PC-9 (cell line): ENCODE measurements at regions of chr17 and their contacts with region 1.

Region 1: DNA sequence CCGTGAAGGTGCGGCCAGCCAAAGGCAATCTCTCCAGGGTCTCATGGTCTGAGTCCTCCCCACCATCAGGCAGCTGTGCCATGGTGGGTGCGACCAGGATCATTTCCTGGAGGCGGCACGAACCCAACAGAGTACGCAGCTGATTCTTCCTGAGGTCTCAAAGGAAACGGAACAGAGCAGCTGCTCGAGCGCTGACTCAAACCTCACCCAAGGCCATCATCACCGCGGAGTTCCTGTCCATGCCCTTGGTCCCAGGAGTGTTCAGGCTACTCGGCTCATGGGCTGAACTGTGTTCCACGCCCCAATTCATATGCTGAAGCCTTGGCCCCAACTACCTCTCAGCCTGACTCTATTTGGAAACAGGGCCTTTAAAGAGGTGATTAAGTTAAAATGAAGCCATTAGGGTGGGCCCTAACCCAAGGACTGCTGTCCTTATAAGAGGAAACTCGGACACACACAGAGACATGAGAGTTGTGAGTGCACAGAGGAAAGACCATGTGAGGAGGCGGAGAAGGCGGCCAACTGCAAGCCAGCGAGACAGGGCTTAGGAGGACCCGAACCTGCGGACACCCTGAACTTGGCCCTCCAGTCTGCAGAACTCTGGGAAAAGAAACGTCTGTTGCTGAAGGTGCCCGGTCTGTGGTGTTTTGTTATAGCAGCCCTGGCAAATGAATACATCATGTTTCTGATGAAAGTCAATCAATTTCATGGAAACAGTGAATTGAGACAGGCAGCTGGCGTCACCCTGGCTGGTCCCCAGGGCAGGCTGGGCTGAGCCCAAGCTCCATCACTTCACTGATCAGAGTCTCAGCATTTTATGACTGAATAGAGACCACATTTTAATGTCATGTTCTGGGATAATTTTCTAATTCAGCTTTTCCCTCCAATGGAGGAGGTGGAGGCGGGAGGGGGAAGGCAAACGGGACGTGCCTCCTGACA is 13.7 kb downstream of the MXRA7 start:
- DNase-seq: no peak
- H3K4me3 ChIP-seq: no peak overlapping the region
- H3K27ac ChIP-seq: no peak overlapping the region
- H3K4me1 ChIP-seq: no peaks in the 10 kb centered on the region
- H3K27me3 ChIP-seq: no peaks in the 10 kb centered on the region
- CTCF ChIP-seq: no peak

Region 2: GRCh38 chr17:76623271-76624146 is 73.5 kb before region 1 on chr17:
- CTCF ChIA-PET with region 1: interaction called, 17 read pairs
- POLR2A ChIA-PET with region 1: no interaction called
- intact Hi-C with region 1: no loop called
- DNase-seq: peak in 1 of 2 experiments; percentile 76
- H3K4me3 ChIP-seq: no peak overlapping the region
- H3K27ac ChIP-seq: no peak overlapping the region
- H3K4me1 ChIP-seq: peaks cover 15% of the 10 kb centered on the region
- H3K27me3 ChIP-seq: no peaks in the 10 kb centered on the region
- CTCF ChIP-seq: peak; percentile 83

Region 3: DNA sequence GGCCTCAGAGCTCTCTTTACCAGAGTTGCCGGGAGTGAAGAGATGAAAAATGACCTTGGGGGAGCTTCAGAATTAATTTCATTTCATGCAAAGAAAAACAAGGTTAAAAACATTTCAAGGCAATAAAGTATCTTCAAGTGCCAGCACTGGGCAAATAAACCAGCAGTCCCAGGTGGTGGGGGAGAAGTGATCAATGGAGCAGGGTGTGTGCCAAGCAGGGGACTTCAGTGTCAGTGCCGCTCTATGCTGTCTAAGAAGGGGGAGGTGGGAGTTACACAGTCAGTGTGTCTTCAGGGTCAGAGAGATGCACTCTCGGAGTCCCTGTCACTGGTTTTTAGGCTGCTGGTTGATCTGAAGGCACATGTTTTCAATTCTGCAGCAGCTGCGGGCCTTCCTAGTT is 113.9 kb after region 1 on chr17:
- CTCF ChIA-PET with region 1: no interaction called
- POLR2A ChIA-PET with region 1: no interaction called
- intact Hi-C with region 1: no loop called
- DNase-seq: no peak
- H3K4me3 ChIP-seq: no peak overlapping the region
- H3K27ac ChIP-seq: no peak overlapping the region
- H3K4me1 ChIP-seq: no peaks in the 10 kb centered on the region
- H3K27me3 ChIP-seq: no peaks in the 10 kb centered on the region
- CTCF ChIP-seq: no peak